Activated B cell treated with CpG ODN at 0.5 μM for 24 hours (primary cell): ENCODE measurements at regions of chr13 and their contacts with region 1.

Region 1: DNA sequence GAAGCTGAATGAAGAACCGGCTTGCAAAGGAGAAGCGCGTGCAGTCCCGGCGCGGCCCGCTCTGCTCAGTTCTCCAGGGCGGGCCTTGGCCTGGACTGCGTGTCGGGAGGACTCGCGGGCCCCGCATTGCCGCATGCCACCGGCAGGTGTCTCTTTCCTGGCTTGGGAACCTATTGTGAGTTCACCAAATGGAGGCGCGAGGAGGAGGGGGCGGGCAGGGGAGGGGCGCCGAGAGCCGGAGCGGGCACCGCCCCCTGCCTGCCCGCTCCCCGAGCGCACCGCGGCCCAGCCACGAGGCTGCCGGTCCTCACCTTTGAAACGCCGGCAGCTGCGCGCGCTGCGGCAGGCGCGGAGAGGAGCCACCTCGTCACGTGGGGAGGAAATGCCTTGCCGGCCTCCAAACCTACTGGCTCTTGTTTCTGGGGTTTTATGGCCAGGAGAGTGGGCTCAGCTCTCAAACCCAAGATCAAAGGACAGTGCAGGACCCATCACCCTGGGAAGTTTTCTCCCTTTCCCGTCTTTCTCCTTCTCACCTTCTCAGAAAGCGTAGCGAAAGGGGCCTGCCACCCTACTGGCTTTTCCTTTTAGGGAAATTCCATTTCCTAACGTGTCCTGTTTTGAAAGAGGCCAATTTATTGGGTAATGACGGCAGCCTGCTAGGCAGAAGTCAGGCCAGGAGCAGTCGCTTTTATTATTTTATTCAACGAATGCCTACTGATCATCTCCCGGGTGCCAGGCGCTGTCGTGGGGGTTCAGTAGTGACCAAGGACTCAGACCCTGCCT is 13.8 kb upstream of the UBE2L5 start:
- DNase-seq: peak; percentile 85
- ATAC-seq: peak; percentile 94
- H3K4me3 Mint-ChIP-seq: peak overlapping the region; percentile 62
- H3K27ac Mint-ChIP-seq: peak overlapping the region; percentile 79
- H3K4me1 Mint-ChIP-seq: peaks cover 53% of the 10 kb centered on the region
- H3K27me3 Mint-ChIP-seq: no peaks in the 10 kb centered on the region
- CTCF ChIP-seq: no peak

Region 2: DNA sequence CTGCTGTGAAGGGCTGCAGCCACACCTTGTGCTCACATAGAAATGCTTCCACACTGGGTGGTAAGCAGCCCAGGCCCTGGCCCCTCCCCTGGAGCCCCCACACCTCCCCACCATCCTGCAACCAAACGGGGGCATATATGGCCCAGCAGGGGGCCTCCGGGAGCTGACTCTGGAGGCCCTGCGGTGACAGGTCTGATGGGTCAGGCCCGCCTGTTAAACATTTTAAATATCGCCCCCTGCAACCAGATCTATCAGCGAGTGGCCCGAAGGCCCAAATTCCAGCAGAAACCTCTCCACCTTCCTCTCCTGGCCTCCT is 53.2 kb before region 1 on chr13:
- CTCF ChIA-PET with region 1: interaction called, 6 read pairs
- POLR2A ChIA-PET with region 1: interaction called, 3 read pairs
- intact Hi-C with region 1: loop called (anchors 1 kb)
- DNase-seq: peak; percentile 61
- ATAC-seq: peak; percentile 100
- H3K4me3 Mint-ChIP-seq: peak overlapping the region; percentile 45
- H3K27ac Mint-ChIP-seq: peak overlapping the region; percentile 77
- H3K4me1 Mint-ChIP-seq: peaks cover 32% of the 10 kb centered on the region
- H3K27me3 Mint-ChIP-seq: no peaks in the 10 kb centered on the region
- CTCF ChIP-seq: no peak

Region 3: DNA sequence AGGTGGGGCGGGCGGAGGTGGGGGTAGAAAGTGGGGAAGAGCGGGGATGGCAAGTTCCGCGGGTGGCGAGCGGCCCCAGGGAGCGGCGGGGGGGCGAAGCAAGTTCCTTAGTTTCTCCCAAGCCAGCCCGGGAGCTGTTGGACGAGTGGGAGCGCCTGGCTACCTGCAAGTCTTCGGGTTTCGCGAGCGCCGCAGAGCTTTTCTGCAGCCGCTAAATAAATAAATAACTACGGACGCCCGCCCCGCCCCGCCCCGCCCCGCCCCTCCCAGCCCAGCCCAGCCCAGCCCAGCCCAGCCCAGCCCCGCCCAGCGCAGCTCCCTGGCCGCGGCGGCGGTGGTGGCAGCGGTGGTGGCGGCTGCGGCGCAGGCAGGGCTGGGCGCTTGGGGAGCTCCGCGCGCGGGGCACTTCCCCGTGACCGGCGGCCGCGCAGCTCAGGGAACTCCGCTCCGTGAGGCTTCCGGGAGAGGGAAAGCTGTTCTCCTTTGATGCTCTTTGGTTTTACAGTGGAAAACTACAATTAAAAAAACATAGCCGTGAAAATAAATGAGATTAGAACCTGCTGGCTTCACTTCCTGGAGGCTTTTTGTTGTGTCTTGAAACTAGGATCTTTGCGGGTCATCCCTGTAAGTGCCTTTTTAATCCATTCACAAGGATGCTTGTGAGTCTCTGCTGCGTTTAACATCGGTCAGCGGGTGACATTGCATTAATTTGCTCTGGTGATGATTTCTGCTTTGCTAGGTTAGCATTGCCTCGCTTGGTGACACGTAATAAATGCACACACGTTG is 13.7 kb after region 1 on chr13 and contains the start of gene UBE2L5:
- CTCF ChIA-PET with region 1: interaction called, 5 read pairs
- POLR2A ChIA-PET with region 1: interaction called, 22 read pairs
- intact Hi-C with region 1: loop called (anchors 1 kb)
- DNase-seq: peak; percentile 75
- ATAC-seq: peak; percentile 94
- H3K4me3 Mint-ChIP-seq: peak within 1 kb of the TSS; percentile 88
- H3K27ac Mint-ChIP-seq: peak within 1 kb of the TSS; percentile 94
- H3K4me1 Mint-ChIP-seq: peaks cover 43% of the 10 kb centered on the region
- H3K27me3 Mint-ChIP-seq: no peaks in the 10 kb centered on the region
- CTCF ChIP-seq: no peak
- total RNA-seq, gene UBE2L5: 0.24 and 0.42 TPM in 2 replicates

Region 4: GRCh38 chr13:30551189-30551588 is 142.7 kb after region 1 on chr13:
- CTCF ChIA-PET with region 1: no interaction called
- POLR2A ChIA-PET with region 1: no interaction called
- intact Hi-C with region 1: loop called (anchors 1 kb)
- DNase-seq: no peak
- ATAC-seq: peak; percentile 85
- H3K4me3 Mint-ChIP-seq: no peak overlapping the region
- H3K27ac Mint-ChIP-seq: no peak overlapping the region
- H3K4me1 Mint-ChIP-seq: peaks cover 11% of the 10 kb centered on the region
- H3K27me3 Mint-ChIP-seq: no peaks in the 10 kb centered on the region
- CTCF ChIP-seq: no peak